CD4-positive, alpha-beta T cell (primary cell): ENCODE measurements at regions of chr14 and their contacts with region 1.

Region 1: GRCh38 chr14:68482772-68483395 is 310.0 kb downstream of the ZFP36L1 start:
- DNase-seq: no peak
- ATAC-seq: no peak
- H3K4me3 ChIP-seq: no peak overlapping the region
- H3K4me3 Mint-ChIP-seq: peak overlapping the region; percentile 35
- H3K27ac ChIP-seq: peak overlapping the region in 1 of 2 donors; percentile 34
- H3K27ac Mint-ChIP-seq: peak overlapping the region; percentile 94
- H3K4me1 ChIP-seq: peaks cover 42% of the 10 kb centered on the region
- H3K4me1 Mint-ChIP-seq: peaks cover 69% of the 10 kb centered on the region
- H3K27me3 ChIP-seq: no peaks in the 10 kb centered on the region
- H3K27me3 Mint-ChIP-seq: no peaks in the 10 kb centered on the region
- CTCF ChIP-seq: no peak

Region 2: GRCh38 chr14:68495101-68496039 is 12.5 kb after region 1 on chr14:
- CTCF ChIA-PET with region 1: no interaction called
- POLR2A ChIA-PET with region 1: interaction called, 11 read pairs
- intact Hi-C with region 1: no loop called
- DNase-seq: peak in 10 of 14 experiments; percentile 15 to 64 (median 28)
- ATAC-seq: peak; percentile 88
- H3K4me3 ChIP-seq: no peak overlapping the region
- H3K4me3 Mint-ChIP-seq: peak overlapping the region; percentile 12
- H3K27ac ChIP-seq: no peak overlapping the region
- H3K27ac Mint-ChIP-seq: peak overlapping the region; percentile 74
- H3K4me1 ChIP-seq: peaks cover 20% of the 10 kb centered on the region
- H3K4me1 Mint-ChIP-seq: peaks cover 57% of the 10 kb centered on the region
- H3K27me3 ChIP-seq: no peaks in the 10 kb centered on the region
- H3K27me3 Mint-ChIP-seq: no peaks in the 10 kb centered on the region
- CTCF ChIP-seq: no peak

Region 3: DNA sequence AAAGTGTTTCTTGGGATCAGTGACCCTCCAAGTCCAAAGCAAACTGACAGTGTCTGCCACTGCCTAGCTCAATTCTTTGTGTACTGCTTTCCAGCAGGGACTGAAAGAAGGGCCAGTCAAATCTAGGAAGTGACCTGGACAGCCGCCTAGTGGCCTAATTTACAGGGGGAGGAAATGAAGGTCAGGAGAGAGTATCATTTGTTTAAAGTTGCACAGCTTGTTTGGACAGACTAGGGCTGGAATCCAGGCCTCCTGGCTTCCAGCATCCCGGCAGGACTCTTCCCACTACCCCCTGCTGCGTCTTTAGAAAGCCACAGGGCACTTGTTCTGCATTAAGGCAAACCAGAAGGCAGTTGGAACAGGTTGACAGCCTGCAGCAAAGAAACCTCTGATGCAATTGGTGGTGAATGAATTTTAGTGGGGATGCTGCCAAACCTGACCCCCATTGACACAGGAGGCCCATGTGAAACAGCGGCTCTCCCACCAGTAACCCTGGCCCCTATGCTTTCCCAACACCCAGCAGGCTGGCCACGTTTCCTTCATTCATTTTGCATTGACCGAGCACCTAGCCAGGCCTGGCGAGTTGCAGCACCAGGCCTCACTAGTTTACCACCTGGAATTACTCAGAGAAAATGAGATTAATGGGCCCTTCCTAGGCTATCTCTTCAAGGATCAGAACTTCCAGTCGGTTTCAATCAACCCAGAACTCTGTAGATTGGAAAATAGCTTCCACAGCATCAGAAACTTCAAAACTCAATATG is 805.3 kb after region 1 on chr14:
- CTCF ChIA-PET with region 1: no interaction called
- POLR2A ChIA-PET with region 1: no interaction called
- intact Hi-C with region 1: no loop called
- DNase-seq: no peak
- ATAC-seq: no peak
- H3K4me3 ChIP-seq: no peak overlapping the region
- H3K4me3 Mint-ChIP-seq: no peak overlapping the region
- H3K27ac ChIP-seq: no peak overlapping the region
- H3K27ac Mint-ChIP-seq: no peak overlapping the region
- H3K4me1 ChIP-seq: no peaks in the 10 kb centered on the region
- H3K4me1 Mint-ChIP-seq: no peaks in the 10 kb centered on the region
- H3K27me3 ChIP-seq: no peaks in the 10 kb centered on the region
- H3K27me3 Mint-ChIP-seq: no peaks in the 10 kb centered on the region
- CTCF ChIP-seq: no peak